ENCODE measurements at regions of chr9 and their contacts with region 1.

Region 1: GRCh38 chr9:135343837-135344522 is 135.6 kb upstream of the PPP1R26 start:
- DNase-seq: peak in 5 of 9 donors; percentile 10 to 63 (median 21)
- ATAC-seq: peak; percentile 54
- H3K4me3 ChIP-seq: no peak overlapping the region
- H3K4me3 Mint-ChIP-seq: no peak overlapping the region
- H3K27ac ChIP-seq: no peak overlapping the region
- H3K27ac Mint-ChIP-seq: no peak overlapping the region
- H3K4me1 ChIP-seq: no peaks in the 10 kb centered on the region
- H3K4me1 Mint-ChIP-seq: peaks cover 0 to 1% (median 0%) of the 10 kb centered on the region in 7 donors
- H3K27me3 ChIP-seq: no peaks in the 10 kb centered on the region
- H3K27me3 Mint-ChIP-seq: peaks cover 0 to 34% (median 8%) of the 10 kb centered on the region in 5 donors

Region 2: DNA sequence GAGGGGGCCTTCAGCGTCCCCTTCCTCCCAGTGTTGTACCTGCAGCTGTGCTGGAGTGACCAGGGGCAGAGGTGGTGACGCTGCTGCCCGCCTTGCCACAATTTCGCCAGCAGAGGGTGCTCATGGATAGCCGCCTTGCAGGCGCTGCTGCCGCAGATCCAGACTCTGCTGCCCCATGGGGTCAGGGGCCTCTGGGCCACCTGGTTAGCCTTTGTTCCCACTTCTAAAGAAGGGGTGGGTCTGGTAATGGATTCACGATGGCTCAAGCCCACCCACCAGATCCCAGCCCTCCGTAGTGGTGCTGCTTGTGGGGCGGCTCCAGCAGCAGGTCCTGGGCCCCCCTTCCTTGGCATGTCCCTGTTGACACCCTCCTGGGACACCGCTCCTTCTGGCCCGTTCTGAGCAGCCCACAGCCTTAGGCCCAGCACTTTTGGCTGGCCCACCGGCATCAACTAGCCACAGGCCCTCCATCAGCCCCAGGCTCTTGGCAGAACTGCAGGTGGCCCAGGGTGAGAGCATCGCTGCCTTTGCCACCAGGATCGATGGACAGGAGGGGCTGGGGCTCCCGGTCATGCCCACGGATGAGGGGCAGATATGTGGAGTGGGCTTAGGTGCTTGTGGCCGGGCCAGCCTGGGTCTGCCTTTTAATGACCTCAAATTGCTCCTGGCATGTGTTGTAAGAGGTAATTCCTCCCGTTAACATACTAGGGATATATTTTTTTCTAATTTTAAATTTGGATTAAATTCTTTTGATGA is 645.2 kb before region 1 on chr9:
- CTCF ChIA-PET with region 1: no interaction called
- POLR2A ChIA-PET with region 1: no interaction called
- intact Hi-C with region 1: loop called in 1 of 2 experiments (anchors 10 kb)
- DNase-seq: peak in 6 of 9 donors; percentile 13 to 54 (median 26)
- ATAC-seq: peak; percentile 52
- H3K4me3 ChIP-seq: no peak overlapping the region
- H3K4me3 Mint-ChIP-seq: no peak overlapping the region
- H3K27ac ChIP-seq: no peak overlapping the region
- H3K27ac Mint-ChIP-seq: no peak overlapping the region
- H3K4me1 ChIP-seq: no peaks in the 10 kb centered on the region
- H3K4me1 Mint-ChIP-seq: peaks cover 0 to 3% (median 0%) of the 10 kb centered on the region in 7 donors
- H3K27me3 ChIP-seq: no peaks in the 10 kb centered on the region
- H3K27me3 Mint-ChIP-seq: no peaks in the 10 kb centered on the region

Measured in naive thymus-derived CD4-positive, alpha-beta T cell (primary cell).